ENCODE measurements at regions of chr11 and their contacts with region 1.

Region 1: GRCh38 chr11:1309498-1310317 is at the start of gene TOLLIP:
- DNase-seq: peak; percentile 93 to 99 (median 98)
- ATAC-seq: peak; percentile 81
- H3K4me3 ChIP-seq: peak within 1 kb of the TSS; percentile 85
- H3K4me3 Mint-ChIP-seq: peak within 1 kb of the TSS; percentile 87
- H3K27ac ChIP-seq: peak within 1 kb of the TSS; percentile 82 to 90
- H3K27ac Mint-ChIP-seq: peak within 1 kb of the TSS; percentile 86
- H3K4me1 ChIP-seq: peaks cover 58% of the 10 kb centered on the region
- H3K4me1 Mint-ChIP-seq: peaks cover 49% of the 10 kb centered on the region
- H3K27me3 ChIP-seq: no peaks in the 10 kb centered on the region
- H3K27me3 Mint-ChIP-seq: no peaks in the 10 kb centered on the region
- CTCF ChIP-seq: peak; percentile 27
- total RNA-seq, gene TOLLIP: 38.9 to 41.0 TPM

Region 2: GRCh38 chr11:639330-639955 is 670.3 kb before region 1 on chr11:
- CTCF ChIA-PET with region 1: no interaction called
- POLR2A ChIA-PET with region 1: no interaction called
- intact Hi-C with region 1: no loop called
- DNase-seq: peak in 1 of 14 experiments; percentile 33
- ATAC-seq: peak; percentile 30
- H3K4me3 ChIP-seq: no peak overlapping the region
- H3K4me3 Mint-ChIP-seq: no peak overlapping the region
- H3K27ac ChIP-seq: no peak overlapping the region
- H3K27ac Mint-ChIP-seq: no peak overlapping the region
- H3K4me1 ChIP-seq: peaks cover 33% of the 10 kb centered on the region
- H3K4me1 Mint-ChIP-seq: peaks cover 12% of the 10 kb centered on the region
- H3K27me3 ChIP-seq: peaks cover 29 to 32% of the 10 kb centered on the region in 2 experiments
- H3K27me3 Mint-ChIP-seq: peaks cover 40% of the 10 kb centered on the region
- CTCF ChIP-seq: no peak

Region 3: DNA sequence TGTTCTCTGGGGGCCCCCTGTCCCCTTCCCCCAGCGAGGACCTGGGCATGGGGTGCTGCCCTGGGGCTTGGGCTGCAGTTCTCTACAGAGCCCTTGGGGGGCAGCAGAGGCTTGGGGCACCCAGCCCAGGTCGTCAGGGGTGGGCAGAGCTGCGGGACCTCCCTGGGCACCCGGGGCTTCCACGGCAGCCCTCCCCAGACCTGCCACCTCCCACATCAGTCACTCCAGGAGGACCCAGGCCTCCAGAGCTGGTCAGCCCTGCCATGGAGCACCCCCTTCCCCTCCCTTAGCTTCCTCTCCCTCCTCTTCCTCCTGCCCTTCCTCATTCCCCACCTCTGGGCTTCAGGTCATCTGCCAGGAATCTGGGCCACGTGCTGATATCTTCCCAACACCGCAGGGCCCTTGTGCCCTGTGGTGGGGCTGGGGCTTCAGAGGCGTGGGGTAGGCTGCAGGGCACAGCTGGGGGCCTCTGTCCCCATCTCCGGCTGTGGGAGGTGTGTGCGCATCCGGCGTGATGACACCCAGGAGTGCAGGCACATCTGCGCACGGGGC is 461.3 kb before region 1 on chr11:
- CTCF ChIA-PET with region 1: no interaction called
- POLR2A ChIA-PET with region 1: no interaction called
- intact Hi-C with region 1: loop called in 1 of 2 experiments (anchors 5 kb)
- DNase-seq: peak; percentile 49 to 79 (median 59)
- ATAC-seq: peak; percentile 85
- H3K4me3 ChIP-seq: no peak overlapping the region
- H3K4me3 Mint-ChIP-seq: peak overlapping the region; percentile 56
- H3K27ac ChIP-seq: no peak overlapping the region
- H3K27ac Mint-ChIP-seq: no peak overlapping the region
- H3K4me1 ChIP-seq: peaks cover 30% of the 10 kb centered on the region
- H3K4me1 Mint-ChIP-seq: peaks cover 4% of the 10 kb centered on the region
- H3K27me3 ChIP-seq: peaks cover 7 to 18% of the 10 kb centered on the region in 2 experiments
- H3K27me3 Mint-ChIP-seq: peaks cover 4% of the 10 kb centered on the region
- CTCF ChIP-seq: peak; percentile 86

Region 4: GRCh38 chr11:1158681-1159487 is 150.8 kb before region 1 on chr11:
- CTCF ChIA-PET with region 1: no interaction called
- POLR2A ChIA-PET with region 1: no interaction called
- intact Hi-C with region 1: no loop called
- DNase-seq: peak in 2 of 14 experiments; percentile 12 to 25
- ATAC-seq: no peak
- H3K4me3 ChIP-seq: no peak overlapping the region
- H3K4me3 Mint-ChIP-seq: no peak overlapping the region
- H3K27ac ChIP-seq: no peak overlapping the region
- H3K27ac Mint-ChIP-seq: no peak overlapping the region
- H3K4me1 ChIP-seq: no peaks in the 10 kb centered on the region
- H3K4me1 Mint-ChIP-seq: no peaks in the 10 kb centered on the region
- H3K27me3 ChIP-seq: no peaks in the 10 kb centered on the region
- H3K27me3 Mint-ChIP-seq: no peaks in the 10 kb centered on the region
- CTCF ChIP-seq: no peak

Region 5: DNA sequence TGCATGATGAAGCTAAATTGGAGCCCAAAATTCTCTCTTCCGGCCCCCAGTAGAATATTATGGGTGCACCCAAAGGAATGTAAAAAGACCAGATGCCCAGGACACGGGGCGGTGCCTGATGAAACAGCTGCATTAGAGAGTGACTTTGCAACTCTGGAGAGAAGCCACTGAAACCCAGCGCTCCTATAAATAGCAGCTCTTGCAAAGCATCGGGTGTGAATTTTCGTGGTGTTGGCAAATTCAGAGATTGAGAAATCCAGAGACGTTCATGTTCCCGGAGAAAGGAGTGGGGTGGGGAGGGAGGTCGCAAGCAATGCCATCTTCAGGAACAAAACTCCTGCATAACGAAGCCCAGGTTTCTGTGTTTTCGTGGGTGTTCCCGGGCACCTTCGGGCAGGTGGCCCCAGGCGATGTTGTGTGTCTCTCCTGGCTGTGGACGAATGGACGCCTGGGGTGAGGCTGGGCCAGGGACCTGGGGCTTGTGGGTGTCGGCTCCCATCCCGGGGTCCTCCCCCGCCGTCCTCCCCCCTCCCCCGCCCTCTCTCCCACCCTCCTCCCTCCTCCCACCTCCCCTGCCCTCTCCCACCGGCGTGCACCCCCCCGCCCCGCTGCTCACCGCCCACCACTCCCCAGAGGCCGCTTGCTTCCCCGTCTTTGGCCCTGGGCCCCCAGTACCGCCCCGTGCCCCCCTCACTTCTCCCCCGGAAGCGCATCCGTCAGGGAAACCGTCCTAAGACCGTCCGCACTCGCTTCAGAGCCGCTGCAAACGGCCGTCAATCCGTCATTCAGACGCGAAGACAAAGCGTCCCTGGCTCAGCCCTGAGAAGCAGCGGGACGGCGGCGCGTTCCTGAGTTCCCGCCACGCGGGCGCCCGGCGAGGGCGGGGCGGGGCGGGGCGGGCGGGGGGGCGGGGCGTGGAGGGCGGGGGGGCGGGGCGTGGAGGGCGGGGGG is 26.4 kb after region 1 on chr11:
- CTCF ChIA-PET with region 1: no interaction called
- POLR2A ChIA-PET with region 1: interaction called, 19 read pairs
- intact Hi-C with region 1: loop called in 1 of 2 experiments (anchors 1 kb)
- DNase-seq: peak in 13 of 14 experiments; percentile 32 to 85 (median 59)
- ATAC-seq: peak; percentile 56
- H3K4me3 ChIP-seq: peak overlapping the region; percentile 59
- H3K4me3 Mint-ChIP-seq: peak overlapping the region; percentile 93
- H3K27ac ChIP-seq: no peak overlapping the region
- H3K27ac Mint-ChIP-seq: peak overlapping the region; percentile 85
- H3K4me1 ChIP-seq: peaks cover 14% of the 10 kb centered on the region
- H3K4me1 Mint-ChIP-seq: peaks cover 22% of the 10 kb centered on the region
- H3K27me3 ChIP-seq: no peaks in the 10 kb centered on the region
- H3K27me3 Mint-ChIP-seq: no peaks in the 10 kb centered on the region
- CTCF ChIP-seq: no peak

Region 6: GRCh38 chr11:1382831-1383607 is 73.3 kb after region 1 on chr11:
- CTCF ChIA-PET with region 1: no interaction called
- POLR2A ChIA-PET with region 1: interaction called, 14 read pairs
- intact Hi-C with region 1: loop called (anchors 2 to 5 kb)
- DNase-seq: peak; percentile 54 to 92 (median 71)
- ATAC-seq: peak; percentile 77
- H3K4me3 ChIP-seq: peak overlapping the region; percentile 63
- H3K4me3 Mint-ChIP-seq: peak overlapping the region; percentile 87
- H3K27ac ChIP-seq: peak overlapping the region; percentile 74 to 85
- H3K27ac Mint-ChIP-seq: peak overlapping the region; percentile 78
- H3K4me1 ChIP-seq: peaks cover 20% of the 10 kb centered on the region
- H3K4me1 Mint-ChIP-seq: peaks cover 6% of the 10 kb centered on the region
- H3K27me3 ChIP-seq: no peaks in the 10 kb centered on the region
- H3K27me3 Mint-ChIP-seq: no peaks in the 10 kb centered on the region
- CTCF ChIP-seq: no peak

Region 7: GRCh38 chr11:1389103-1389931 is 79.6 kb after region 1 on chr11:
- CTCF ChIA-PET with region 1: no interaction called
- POLR2A ChIA-PET with region 1: interaction called, 13 read pairs
- intact Hi-C with region 1: loop called in 1 of 2 experiments (anchors 5 kb)
- DNase-seq: peak; percentile 96 to 99 (median 97)
- ATAC-seq: peak; percentile 95
- H3K4me3 ChIP-seq: peak overlapping the region; percentile 67
- H3K4me3 Mint-ChIP-seq: peak overlapping the region; percentile 68
- H3K27ac ChIP-seq: no peak overlapping the region
- H3K27ac Mint-ChIP-seq: no peak overlapping the region
- H3K4me1 ChIP-seq: peaks cover 22% of the 10 kb centered on the region
- H3K4me1 Mint-ChIP-seq: peaks cover 7% of the 10 kb centered on the region
- H3K27me3 ChIP-seq: peaks cover 20 to 24% of the 10 kb centered on the region in 2 experiments
- H3K27me3 Mint-ChIP-seq: peaks cover 28% of the 10 kb centered on the region
- CTCF ChIP-seq: peak; percentile 19